Testis (tissue), 5 donors: ENCODE measurements at regions of chr11 and their contacts with region 1.

Region 1: DNA sequence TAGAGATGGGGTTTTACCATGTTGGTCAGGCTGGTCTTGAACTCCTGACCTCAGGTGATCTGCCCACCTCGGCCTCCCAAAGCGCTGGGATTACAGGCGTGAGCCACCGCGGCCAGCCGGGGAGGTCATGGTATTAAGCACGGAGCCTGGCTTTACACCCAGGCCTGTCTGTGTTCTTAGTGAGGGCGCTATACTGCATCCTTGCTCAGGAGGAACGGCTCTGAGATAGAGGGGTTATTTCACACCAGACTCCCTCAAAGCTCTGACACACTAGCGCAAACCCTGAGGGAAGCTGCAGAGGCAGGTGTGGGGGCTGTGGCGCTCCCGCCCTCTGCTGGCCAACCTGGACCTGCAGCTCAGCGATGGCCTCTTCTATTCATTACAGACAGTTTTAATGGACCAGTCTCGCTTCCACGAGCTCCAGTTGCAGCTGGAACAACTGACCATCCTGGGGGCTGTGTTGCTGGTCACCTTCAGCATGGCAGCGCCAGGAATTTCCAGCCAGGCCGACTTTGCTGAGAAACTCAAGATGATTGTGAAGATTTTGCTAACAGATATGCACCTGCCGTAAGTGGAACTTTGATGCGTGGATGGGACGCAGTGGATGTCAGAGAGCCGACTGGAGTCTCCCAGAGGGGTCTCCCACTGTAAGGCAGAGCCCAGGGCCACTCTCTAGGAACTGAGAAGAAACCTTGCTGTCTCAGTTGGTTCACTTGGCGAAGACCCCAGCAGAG is 26.2 kb downstream of the TCP11L1 start:
- DNase-seq: peak; percentile 74
- H3K4me3 ChIP-seq: no peak overlapping the region
- H3K27ac ChIP-seq: no peak overlapping the region
- H3K4me1 ChIP-seq: no peaks in the 10 kb centered on the region
- H3K27me3 ChIP-seq: no peaks in the 10 kb centered on the region
- CTCF ChIP-seq: peak; percentile 68 to 75 (median 71)
- POLR2A ChIP-seq: no peak

Region 2: GRCh38 chr11:32953700-32954099 is 111.9 kb before region 1 on chr11:
- intact Hi-C with region 1: loop called (anchors 10 kb)
- DNase-seq: no peak
- H3K4me3 ChIP-seq: no peak overlapping the region
- H3K27ac ChIP-seq: no peak overlapping the region
- H3K4me1 ChIP-seq: no peaks in the 10 kb centered on the region
- H3K27me3 ChIP-seq: no peaks in the 10 kb centered on the region
- CTCF ChIP-seq: no peak
- POLR2A ChIP-seq: no peak

Region 3: GRCh38 chr11:33310720-33311500 is 245.3 kb after region 1 on chr11:
- intact Hi-C with region 1: no loop called
- DNase-seq: no peak
- H3K4me3 ChIP-seq: no peak overlapping the region
- H3K27ac ChIP-seq: no peak overlapping the region
- H3K4me1 ChIP-seq: no peaks in the 10 kb centered on the region
- H3K27me3 ChIP-seq: no peaks in the 10 kb centered on the region
- CTCF ChIP-seq: no peak
- POLR2A ChIP-seq: no peak

Region 4: GRCh38 chr11:33379947-33380346 is 314.3 kb after region 1 on chr11:
- intact Hi-C with region 1: no loop called
- DNase-seq: no peak
- H3K4me3 ChIP-seq: no peak overlapping the region
- H3K27ac ChIP-seq: no peak overlapping the region
- H3K4me1 ChIP-seq: no peaks in the 10 kb centered on the region
- H3K27me3 ChIP-seq: no peaks in the 10 kb centered on the region
- CTCF ChIP-seq: no peak
- POLR2A ChIP-seq: no peak

Region 5: GRCh38 chr11:33531743-33532181 is 466.1 kb after region 1 on chr11:
- intact Hi-C with region 1: no loop called
- DNase-seq: no peak
- H3K4me3 ChIP-seq: no peak overlapping the region
- H3K27ac ChIP-seq: no peak overlapping the region
- H3K4me1 ChIP-seq: no peaks in the 10 kb centered on the region
- H3K27me3 ChIP-seq: no peaks in the 10 kb centered on the region
- CTCF ChIP-seq: no peak
- POLR2A ChIP-seq: no peak